ENCODE measurements at regions of chr6 and their contacts with region 1.

Region 1: GRCh38 chr6:20126789-20127653 is 85.2 kb downstream of the MBOAT1 start:
- DNase-seq: peak; percentile 11
- H3K4me3 ChIP-seq: no peak overlapping the region
- H3K27ac ChIP-seq: no peak overlapping the region
- H3K27me3 ChIP-seq: no peaks in the 10 kb centered on the region
- CTCF ChIP-seq: peak; percentile 97

Region 2: DNA sequence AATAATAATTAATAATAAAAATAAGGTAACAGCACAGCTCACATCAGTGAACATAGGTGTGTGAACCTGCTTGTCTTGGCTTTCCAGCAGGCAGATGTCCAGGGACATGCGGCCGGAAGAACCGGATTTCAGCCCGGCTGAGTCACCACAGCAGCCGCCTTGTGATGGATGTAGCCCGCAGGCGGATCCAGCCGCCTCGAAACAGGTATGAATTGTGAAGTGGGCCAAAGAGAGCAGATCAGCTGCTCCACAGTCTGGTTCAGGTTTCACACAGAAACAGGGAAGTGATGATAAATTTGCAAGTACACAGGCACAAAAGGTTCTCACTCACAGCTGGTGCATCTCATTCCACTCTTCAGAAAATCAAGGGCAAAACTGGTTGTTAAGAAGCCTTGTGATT is 234.8 kb before region 1 on chr6:
- CTCF ChIA-PET with region 1: no interaction called
- POLR2A ChIA-PET with region 1: no interaction called
- DNase-seq: no peak
- H3K4me3 ChIP-seq: no peak overlapping the region
- H3K27ac ChIP-seq: no peak overlapping the region
- H3K27me3 ChIP-seq: no peaks in the 10 kb centered on the region
- CTCF ChIP-seq: no peak

Region 3: DNA sequence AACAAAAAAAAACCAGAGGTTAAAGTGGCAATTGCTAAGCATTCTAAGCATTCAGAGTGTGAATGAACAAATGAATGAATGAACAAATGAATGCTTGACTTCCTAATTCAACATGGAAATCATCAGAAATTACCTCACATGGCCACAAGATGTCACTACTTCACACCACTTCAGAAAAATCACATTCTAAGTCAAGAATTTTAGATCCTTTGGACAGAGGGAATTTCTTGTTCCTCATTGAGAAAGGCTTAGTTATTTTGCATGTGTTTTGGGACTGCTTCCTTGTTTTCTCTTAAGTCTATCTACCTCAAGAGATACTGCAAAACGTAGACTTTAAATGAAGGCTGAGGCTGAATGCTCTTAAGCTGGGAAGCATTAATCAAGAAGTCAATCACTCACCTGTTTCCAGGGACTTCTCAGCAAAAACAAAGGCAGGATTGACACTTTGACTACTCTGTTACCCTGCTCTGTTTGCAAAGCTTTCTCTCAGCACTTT is 34.9 kb before region 1 on chr6:
- CTCF ChIA-PET with region 1: interaction called, 84 read pairs
- POLR2A ChIA-PET with region 1: no interaction called
- DNase-seq: peak; percentile 6
- H3K4me3 ChIP-seq: no peak overlapping the region
- H3K27ac ChIP-seq: no peak overlapping the region
- H3K27me3 ChIP-seq: no peaks in the 10 kb centered on the region
- CTCF ChIP-seq: peak; percentile 68

Region 4: DNA sequence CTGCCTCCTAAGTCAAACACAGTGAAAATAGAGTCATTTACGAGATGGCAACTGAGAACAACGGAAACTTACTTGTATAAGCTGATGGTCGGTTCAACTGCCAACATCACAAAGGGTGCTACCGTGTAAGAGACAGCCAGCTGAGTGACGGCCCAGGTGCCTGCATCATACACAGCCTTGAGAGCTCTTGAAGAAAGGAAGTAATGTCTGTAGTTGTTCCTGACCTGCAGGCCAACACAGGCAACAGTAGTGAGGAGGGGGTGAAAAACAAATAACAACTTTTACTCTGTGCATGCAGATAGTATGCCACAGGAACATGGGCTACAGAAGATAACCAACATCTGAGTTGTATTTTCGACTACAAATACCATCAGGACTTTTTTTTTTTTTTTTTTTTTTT is 17.5 kb before region 1 on chr6:
- CTCF ChIA-PET with region 1: interaction called, 37 read pairs
- POLR2A ChIA-PET with region 1: no interaction called
- DNase-seq: no peak
- H3K4me3 ChIP-seq: no peak overlapping the region
- H3K27ac ChIP-seq: no peak overlapping the region
- H3K27me3 ChIP-seq: no peaks in the 10 kb centered on the region
- CTCF ChIP-seq: no peak

Region 5: GRCh38 chr6:20148433-20148832 is 21.4 kb after region 1 on chr6:
- CTCF ChIA-PET with region 1: interaction called, 14 read pairs
- POLR2A ChIA-PET with region 1: no interaction called
- DNase-seq: no peak
- H3K4me3 ChIP-seq: no peak overlapping the region
- H3K27ac ChIP-seq: no peak overlapping the region
- H3K27me3 ChIP-seq: no peaks in the 10 kb centered on the region
- CTCF ChIP-seq: no peak

Region 6: GRCh38 chr6:20159781-20160540 is 32.9 kb after region 1 on chr6:
- CTCF ChIA-PET with region 1: interaction called, 15 read pairs
- POLR2A ChIA-PET with region 1: no interaction called
- DNase-seq: no peak
- H3K4me3 ChIP-seq: no peak overlapping the region
- H3K27ac ChIP-seq: no peak overlapping the region
- H3K27me3 ChIP-seq: no peaks in the 10 kb centered on the region
- CTCF ChIP-seq: no peak

Region 7: GRCh38 chr6:20173833-20174792 is 47.1 kb after region 1 on chr6:
- CTCF ChIA-PET with region 1: interaction called, 10 read pairs
- POLR2A ChIA-PET with region 1: no interaction called
- DNase-seq: no peak
- H3K4me3 ChIP-seq: no peak overlapping the region
- H3K27ac ChIP-seq: no peak overlapping the region
- H3K27me3 ChIP-seq: no peaks in the 10 kb centered on the region
- CTCF ChIP-seq: no peak

Region 8: GRCh38 chr6:20202324-20202658 is 75.3 kb after region 1 on chr6:
- CTCF ChIA-PET with region 1: interaction called, 17 read pairs
- POLR2A ChIA-PET with region 1: no interaction called
- DNase-seq: no peak
- H3K4me3 ChIP-seq: no peak overlapping the region
- H3K27ac ChIP-seq: no peak overlapping the region
- H3K27me3 ChIP-seq: no peaks in the 10 kb centered on the region
- CTCF ChIP-seq: no peak

Measured in AG04450 (cell line).